ENCODE measurements at regions of chr1 and their contacts with region 1.

Region 1: DNA sequence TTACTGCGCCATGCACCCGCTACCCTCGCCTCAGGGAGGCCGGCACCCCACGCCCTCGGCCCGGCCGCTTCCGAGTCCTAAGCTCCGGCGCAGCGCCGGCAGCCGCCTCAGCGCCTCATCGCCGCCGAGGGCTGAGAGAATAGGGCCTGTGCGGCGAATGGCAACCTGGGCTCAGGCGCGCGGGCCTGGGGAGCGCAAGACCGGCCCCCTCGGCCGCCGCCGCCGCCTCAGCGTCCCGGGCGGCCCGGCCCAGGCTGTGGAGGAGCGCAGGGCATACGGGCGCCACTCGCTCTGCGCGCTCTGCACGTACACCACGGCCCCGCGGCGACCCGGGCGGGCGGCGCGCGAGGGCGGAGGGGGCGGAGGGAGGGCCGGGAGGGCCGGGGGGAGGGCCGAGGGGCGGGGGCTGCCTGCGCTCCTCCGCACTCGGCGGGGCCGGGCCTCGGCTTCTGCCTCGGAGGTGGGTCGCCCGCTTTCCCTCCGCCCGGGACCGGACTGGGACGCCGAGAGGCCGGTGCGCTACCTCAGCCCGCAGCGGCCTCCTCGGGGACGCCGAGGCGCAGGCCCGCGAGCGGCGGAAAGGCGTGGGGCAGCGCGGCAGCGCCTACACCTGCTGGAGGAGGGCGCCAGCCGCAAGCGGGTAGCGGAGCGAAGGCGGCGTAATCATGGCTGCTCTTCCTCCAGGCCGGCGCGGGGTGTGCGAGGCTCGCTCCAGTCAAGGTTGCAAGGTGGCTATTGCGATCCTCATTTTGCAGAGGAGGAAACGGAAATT is at the start of gene EGLN1:
- DNase-seq: peak; percentile 88 to 96 (median 94)
- ATAC-seq: peak; percentile 82
- H3K4me3 ChIP-seq: peak within 1 kb of the TSS; percentile 62
- H3K27ac ChIP-seq: peak within 1 kb of the TSS; percentile 75
- H3K4me1 ChIP-seq: peaks cover 19 to 22% of the 10 kb centered on the region in 2 experiments
- H3K27me3 ChIP-seq: no peaks in the 10 kb centered on the region
- CTCF ChIP-seq: peak; percentile 61 to 81 (median 74)
- EP300 ChIP-seq: no peak
- POLR2A ChIP-seq: peak; percentile 88
- RAD21 ChIP-seq: peak; percentile 79
- polyA plus RNA-seq, gene EGLN1: 5.2 to 5.6 TPM

Region 2: GRCh38 chr1:230832476-230832875 is 589.7 kb before region 1 on chr1:
- CTCF ChIA-PET with region 1: no interaction called
- POLR2A ChIA-PET with region 1: no interaction called
- in situ Hi-C with region 1: no loop called
- intact Hi-C with region 1: no loop called
- DNase-seq: no peak
- ATAC-seq: no peak
- H3K4me3 ChIP-seq: no peak overlapping the region
- H3K27ac ChIP-seq: no peak overlapping the region
- H3K4me1 ChIP-seq: no peaks in the 10 kb centered on the region
- H3K27me3 ChIP-seq: peaks cover 2 to 4% of the 10 kb centered on the region in 2 experiments; a peak in 2 of 5 replicates
- CTCF ChIP-seq: no peak
- EP300 ChIP-seq: no peak
- POLR2A ChIP-seq: no peak
- RAD21 ChIP-seq: no peak

Region 3: DNA sequence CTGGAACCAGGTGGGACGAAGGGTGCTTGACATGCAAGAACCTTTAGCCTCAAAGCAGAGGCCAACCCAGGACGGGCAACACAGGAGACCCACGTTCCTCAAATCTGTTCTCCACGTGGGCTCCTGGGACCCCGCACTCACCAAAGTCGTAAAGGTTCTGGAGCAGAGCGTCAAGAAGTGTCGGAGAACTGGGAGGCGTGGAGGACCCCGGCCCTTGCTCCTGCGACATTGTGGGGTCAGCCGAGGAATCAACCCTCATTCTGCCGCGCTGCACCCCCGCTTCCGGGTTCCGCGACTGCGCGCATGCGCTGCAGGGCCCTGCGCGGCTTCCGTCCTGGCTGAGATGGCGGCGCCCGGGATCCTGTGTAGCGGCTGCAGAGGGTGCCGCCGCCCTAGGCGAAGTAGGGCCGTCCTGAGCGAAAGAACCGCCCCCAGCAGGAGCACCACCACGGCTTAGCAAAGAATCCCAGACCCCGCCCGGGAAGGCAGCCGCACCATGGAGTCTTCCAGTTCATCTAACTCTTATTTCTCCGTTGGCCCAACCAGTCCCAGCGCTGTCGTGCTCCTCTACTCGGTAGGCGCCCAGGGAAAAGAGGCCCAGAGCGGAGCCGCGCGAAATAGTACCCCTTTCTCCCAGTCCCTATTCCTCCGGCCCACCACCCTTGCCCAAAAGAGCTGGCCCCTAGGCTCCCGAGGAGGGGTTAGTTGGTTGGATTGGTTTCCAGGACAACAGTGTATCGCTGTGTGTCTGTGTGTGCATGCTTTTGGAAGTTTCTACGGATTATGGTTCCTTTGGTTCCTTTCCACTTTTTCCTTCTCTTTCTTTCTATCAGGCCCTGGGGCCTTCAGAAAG is 181.1 kb before region 1 on chr1 and contains the start of gene GNPAT:
- CTCF ChIA-PET with region 1: no interaction called
- POLR2A ChIA-PET with region 1: no interaction called
- in situ Hi-C with region 1: no loop called
- intact Hi-C with region 1: loop called (anchors 5 kb)
- DNase-seq: peak; percentile 95 to 99 (median 98)
- ATAC-seq: peak; percentile 98
- H3K4me3 ChIP-seq: peak within 1 kb of the TSS; percentile 62
- H3K27ac ChIP-seq: peak within 1 kb of the TSS; percentile 81
- H3K4me1 ChIP-seq: peaks cover 5 to 18% of the 10 kb centered on the region in 2 experiments; a peak in 3 of 5 replicates
- H3K27me3 ChIP-seq: no peaks in the 10 kb centered on the region
- CTCF ChIP-seq: peak in 1 of 3 experiments; percentile 20; a peak in 1 of 6 replicates
- EP300 ChIP-seq: no peak
- POLR2A ChIP-seq: peak; percentile 97
- RAD21 ChIP-seq: no peak
- polyA plus RNA-seq, gene GNPAT: 32.1 to 49.8 TPM

Region 4: GRCh38 chr1:231295938-231296337 is 126.2 kb before region 1 on chr1:
- CTCF ChIA-PET with region 1: no interaction called
- POLR2A ChIA-PET with region 1: no interaction called
- in situ Hi-C with region 1: no loop called
- intact Hi-C with region 1: no loop called
- DNase-seq: no peak
- ATAC-seq: no peak
- H3K4me3 ChIP-seq: no peak overlapping the region
- H3K27ac ChIP-seq: no peak overlapping the region
- H3K4me1 ChIP-seq: no peaks in the 10 kb centered on the region
- H3K27me3 ChIP-seq: peaks cover 19 to 20% of the 10 kb centered on the region in 2 experiments
- CTCF ChIP-seq: no peak
- EP300 ChIP-seq: no peak
- POLR2A ChIP-seq: no peak
- RAD21 ChIP-seq: no peak

Region 5: DNA sequence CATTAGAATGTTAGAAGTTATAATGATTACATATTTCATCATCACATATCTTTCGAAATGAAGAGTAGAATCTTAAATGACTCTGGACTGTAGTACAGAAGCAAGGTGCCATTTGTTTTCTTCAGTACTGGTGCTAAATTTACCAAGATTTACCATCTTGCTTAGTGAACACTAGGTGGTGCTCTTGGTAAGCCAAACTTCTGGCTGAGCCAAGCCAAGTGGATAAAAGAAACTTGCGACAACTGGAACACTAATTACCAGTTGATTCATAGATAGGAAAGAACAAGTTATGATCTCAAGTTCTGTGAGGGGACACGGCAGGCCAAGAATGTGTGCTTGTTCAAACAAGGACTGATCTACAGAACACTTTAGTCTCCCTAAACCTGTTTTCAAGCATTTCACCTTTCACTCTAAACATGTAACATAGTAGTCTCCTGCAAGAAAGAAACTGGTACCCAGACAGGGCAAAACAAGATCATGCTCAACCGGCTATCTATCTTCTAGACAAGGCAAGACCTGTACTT is 64.3 kb before region 1 on chr1:
- CTCF ChIA-PET with region 1: interaction called, 5 read pairs
- POLR2A ChIA-PET with region 1: interaction called, 3 read pairs
- in situ Hi-C with region 1: no loop called
- intact Hi-C with region 1: loop called (anchors 2 kb)
- DNase-seq: peak; percentile 51 to 70 (median 56)
- ATAC-seq: peak; percentile 87
- H3K4me3 ChIP-seq: no peak overlapping the region
- H3K27ac ChIP-seq: no peak overlapping the region
- H3K4me1 ChIP-seq: peaks cover 0 to 21% of the 10 kb centered on the region in 2 experiments; a peak in 3 of 5 replicates
- H3K27me3 ChIP-seq: no peaks in the 10 kb centered on the region
- CTCF ChIP-seq: peak; percentile 78 to 95 (median 82)
- EP300 ChIP-seq: no peak
- POLR2A ChIP-seq: no peak
- RAD21 ChIP-seq: peak; percentile 97 to 98

Region 6: DNA sequence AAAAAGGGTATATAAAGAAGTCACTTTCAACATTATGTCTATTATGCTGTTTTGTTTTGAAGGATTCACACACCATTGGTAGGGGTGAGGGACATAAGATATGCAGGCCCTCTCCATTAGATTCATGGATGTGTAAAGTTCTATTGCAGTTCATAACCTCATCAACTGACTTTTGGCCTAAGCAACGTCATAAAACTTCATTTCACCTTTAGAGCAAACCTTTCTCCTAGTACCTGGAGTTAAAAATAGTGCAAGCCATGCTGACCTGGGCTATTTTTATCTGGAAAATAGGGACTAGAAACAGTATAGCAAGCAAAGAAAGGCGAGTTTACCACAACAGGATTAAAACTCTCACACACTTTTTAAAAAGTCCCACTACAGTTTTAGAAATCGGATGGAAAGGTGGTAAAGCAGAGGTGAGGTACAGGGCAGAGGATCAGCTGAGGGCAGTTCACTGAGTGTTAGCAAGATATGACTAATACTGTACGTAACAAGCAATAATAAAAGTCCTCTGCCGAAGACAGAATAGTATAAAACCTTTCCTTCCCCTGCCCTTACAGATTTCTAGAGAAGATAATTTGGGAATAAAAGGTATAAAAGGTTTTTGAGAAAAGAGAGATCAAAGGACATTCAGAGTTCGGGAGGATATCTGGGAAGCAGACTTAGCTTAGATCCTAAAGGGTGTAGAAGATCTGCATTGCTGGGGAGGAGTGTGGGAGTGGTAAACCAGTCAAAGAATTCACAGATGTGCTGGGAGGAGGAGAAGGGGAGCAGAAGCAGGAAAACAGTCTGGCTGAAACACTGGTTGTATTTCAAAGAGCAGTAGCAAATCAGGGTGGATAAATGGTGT is 14.4 kb before region 1 on chr1:
- CTCF ChIA-PET with region 1: no interaction called
- POLR2A ChIA-PET with region 1: interaction called, 18 read pairs
- in situ Hi-C with region 1: no loop called
- intact Hi-C with region 1: loop called (anchors 1 kb)
- DNase-seq: no peak
- ATAC-seq: peak; percentile 53
- H3K4me3 ChIP-seq: no peak overlapping the region
- H3K27ac ChIP-seq: no peak overlapping the region
- H3K4me1 ChIP-seq: no peaks in the 10 kb centered on the region; a peak in 2 of 5 replicates
- H3K27me3 ChIP-seq: no peaks in the 10 kb centered on the region
- CTCF ChIP-seq: no peak
- EP300 ChIP-seq: no peak
- POLR2A ChIP-seq: no peak
- RAD21 ChIP-seq: no peak

Region 7: DNA sequence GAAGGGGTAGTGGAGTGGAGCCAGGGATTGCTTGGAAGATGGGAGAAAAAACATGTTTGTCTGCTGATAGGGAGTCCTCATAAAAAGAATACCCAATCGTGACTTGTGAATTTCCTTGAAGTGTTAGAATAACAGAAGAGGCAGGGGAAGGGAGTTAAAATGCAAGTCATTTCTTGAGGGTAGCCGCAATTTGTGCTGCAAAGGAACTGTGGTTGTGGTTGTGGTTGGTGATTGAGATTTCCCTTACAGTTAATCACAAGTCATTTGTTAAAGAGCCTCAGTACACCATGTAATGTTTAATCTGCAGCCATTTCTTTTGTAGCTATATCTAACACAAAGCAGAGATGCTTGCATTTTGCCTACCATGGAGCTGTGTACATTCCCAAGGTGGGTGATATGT is 38.4 kb after region 1 on chr1:
- CTCF ChIA-PET with region 1: no interaction called
- POLR2A ChIA-PET with region 1: no interaction called
- in situ Hi-C with region 1: no loop called
- intact Hi-C with region 1: no loop called
- DNase-seq: peak in 2 of 4 experiments; percentile 18 to 55
- ATAC-seq: peak; percentile 72
- H3K4me3 ChIP-seq: no peak overlapping the region
- H3K27ac ChIP-seq: no peak overlapping the region
- H3K4me1 ChIP-seq: no peaks in the 10 kb centered on the region; a peak in 1 of 5 replicates
- H3K27me3 ChIP-seq: no peaks in the 10 kb centered on the region; a peak in 1 of 5 replicates
- CTCF ChIP-seq: no peak
- EP300 ChIP-seq: no peak
- POLR2A ChIP-seq: no peak
- RAD21 ChIP-seq: 0 out of 4 replicates have a peak, but pooled peaks of 1 of the 2 experiments have one; percentile 4

Region 8: GRCh38 chr1:231493421-231494185 is 71.4 kb after region 1 on chr1:
- CTCF ChIA-PET with region 1: no interaction called
- POLR2A ChIA-PET with region 1: no interaction called
- in situ Hi-C with region 1: no loop called
- intact Hi-C with region 1: loop called (anchors 5 kb)
- DNase-seq: peak in 2 of 4 experiments; percentile 37 to 68
- ATAC-seq: peak; percentile 83
- H3K4me3 ChIP-seq: no peak overlapping the region
- H3K27ac ChIP-seq: no peak overlapping the region
- H3K4me1 ChIP-seq: 0 out of 5 replicates have a peak, but pooled peaks cover 0 to 2% of the 10 kb centered on the region in 2 experiments
- H3K27me3 ChIP-seq: no peaks in the 10 kb centered on the region
- CTCF ChIP-seq: peak in 2 of 3 experiments; percentile 12 to 39; a peak in 1 of 6 replicates
- EP300 ChIP-seq: no peak
- POLR2A ChIP-seq: no peak
- RAD21 ChIP-seq: peak; percentile 28 to 64

Region 9: GRCh38 chr1:231528172-231529029 is 106.2 kb after region 1 on chr1 and contains the start of gene TSNAX:
- CTCF ChIA-PET with region 1: no interaction called
- POLR2A ChIA-PET with region 1: interaction called, 13 read pairs
- in situ Hi-C with region 1: no loop called
- intact Hi-C with region 1: loop called (anchors 2 kb)
- DNase-seq: peak; percentile 97 to 98 (median 98)
- ATAC-seq: peak; percentile 93
- H3K4me3 ChIP-seq: peak within 1 kb of the TSS; percentile 87
- H3K27ac ChIP-seq: peak within 1 kb of the TSS; percentile 96
- H3K4me1 ChIP-seq: peaks cover 20% of the 10 kb centered on the region in 2 experiments
- H3K27me3 ChIP-seq: no peaks in the 10 kb centered on the region
- CTCF ChIP-seq: no peak; a peak in 1 of 6 replicates
- EP300 ChIP-seq: no peak; the same call in none of the 2 replicates
- POLR2A ChIP-seq: peak; percentile 96
- RAD21 ChIP-seq: no peak
- polyA plus RNA-seq, gene TSNAX: 77.3 to 82.4 TPM

Region 10: DNA sequence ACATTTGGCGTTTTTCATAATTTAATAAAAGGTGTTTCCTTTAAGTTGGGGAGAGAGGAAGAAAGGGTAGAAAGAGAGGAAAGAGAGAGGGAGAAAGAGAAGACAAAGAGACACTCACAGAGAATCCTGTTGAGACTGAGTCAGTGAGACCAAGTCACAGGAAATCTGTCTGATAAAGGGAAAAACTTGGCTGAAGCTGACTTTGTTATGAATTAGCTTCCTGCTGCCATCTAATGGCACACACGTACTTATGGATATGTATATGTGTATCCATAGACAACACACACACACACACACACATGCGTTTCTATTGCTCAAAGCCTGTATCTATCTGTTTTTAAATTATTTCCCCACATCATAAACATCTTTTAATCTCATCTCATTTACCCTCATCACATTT is 161.9 kb after region 1 on chr1:
- CTCF ChIA-PET with region 1: no interaction called
- POLR2A ChIA-PET with region 1: no interaction called
- in situ Hi-C with region 1: no loop called
- intact Hi-C with region 1: loop called (anchors 2 kb)
- DNase-seq: peak in 2 of 4 experiments; percentile 46 to 68
- ATAC-seq: peak; percentile 88
- H3K4me3 ChIP-seq: no peak overlapping the region
- H3K27ac ChIP-seq: no peak overlapping the region
- H3K4me1 ChIP-seq: no peaks in the 10 kb centered on the region; a peak in 1 of 5 replicates
- H3K27me3 ChIP-seq: no peaks in the 10 kb centered on the region
- CTCF ChIP-seq: peak in 2 of 3 experiments; percentile 51 to 73; a peak in 4 of 6 replicates
- EP300 ChIP-seq: 0 out of 2 replicates have a peak, but pooled peaks have one; percentile 11
- POLR2A ChIP-seq: no peak
- RAD21 ChIP-seq: peak; percentile 69 to 93

Region 11: GRCh38 chr1:231626535-231626945 is 204.4 kb after region 1 on chr1 and contains the start of gene DISC1:
- CTCF ChIA-PET with region 1: no interaction called
- POLR2A ChIA-PET with region 1: no interaction called
- in situ Hi-C with region 1: no loop called
- intact Hi-C with region 1: no loop called
- DNase-seq: peak; percentile 46 to 70 (median 53)
- ATAC-seq: peak; percentile 83
- H3K4me3 ChIP-seq: peak within 1 kb of the TSS; percentile 30
- H3K27ac ChIP-seq: no peak within 1 kb of the TSS
- H3K4me1 ChIP-seq: peaks cover 0 to 11% of the 10 kb centered on the region in 2 experiments; a peak in 3 of 5 replicates
- H3K27me3 ChIP-seq: peaks cover 21 to 37% of the 10 kb centered on the region in 2 experiments
- CTCF ChIP-seq: no peak
- EP300 ChIP-seq: no peak
- POLR2A ChIP-seq: no peak
- RAD21 ChIP-seq: no peak
- polyA plus RNA-seq, gene DISC1: 0.01 TPM in 1 of 2 experiments, not detected in the other

Measured in K562 (cell line).